K562 (cell line): ENCODE measurements at regions of chrX and their contacts with region 1.

Region 1: GRCh38 chrX:131830400-131831184 is 192.5 kb upstream of the STK26 start:
- DNase-seq: peak; percentile 71 to 92 (median 75)
- ATAC-seq: peak; percentile 96
- H3K4me3 ChIP-seq: peak overlapping the region; percentile 53
- H3K27ac ChIP-seq: peak overlapping the region; percentile 70
- H3K4me1 ChIP-seq: peaks cover 0 to 12% of the 10 kb centered on the region in 2 experiments; a peak in 2 of 5 replicates
- H3K27me3 ChIP-seq: no peaks in the 10 kb centered on the region
- CTCF ChIP-seq: peak; percentile 50 to 84 (median 82)
- EP300 ChIP-seq: peak; percentile 68
- POLR2A ChIP-seq: peak; percentile 73
- RAD21 ChIP-seq: peak; percentile 74 to 86

Region 2: GRCh38 chrX:131901546-131901945 is 71.0 kb after region 1 on chrX:
- CTCF ChIA-PET with region 1: no interaction called
- POLR2A ChIA-PET with region 1: no interaction called
- in situ Hi-C with region 1: no loop called
- intact Hi-C with region 1: no loop called
- DNase-seq: no peak
- ATAC-seq: no peak
- H3K4me3 ChIP-seq: no peak overlapping the region
- H3K27ac ChIP-seq: no peak overlapping the region
- H3K4me1 ChIP-seq: no peaks in the 10 kb centered on the region
- H3K27me3 ChIP-seq: no peaks in the 10 kb centered on the region
- CTCF ChIP-seq: no peak
- EP300 ChIP-seq: no peak
- POLR2A ChIP-seq: no peak
- RAD21 ChIP-seq: no peak

Region 3: DNA sequence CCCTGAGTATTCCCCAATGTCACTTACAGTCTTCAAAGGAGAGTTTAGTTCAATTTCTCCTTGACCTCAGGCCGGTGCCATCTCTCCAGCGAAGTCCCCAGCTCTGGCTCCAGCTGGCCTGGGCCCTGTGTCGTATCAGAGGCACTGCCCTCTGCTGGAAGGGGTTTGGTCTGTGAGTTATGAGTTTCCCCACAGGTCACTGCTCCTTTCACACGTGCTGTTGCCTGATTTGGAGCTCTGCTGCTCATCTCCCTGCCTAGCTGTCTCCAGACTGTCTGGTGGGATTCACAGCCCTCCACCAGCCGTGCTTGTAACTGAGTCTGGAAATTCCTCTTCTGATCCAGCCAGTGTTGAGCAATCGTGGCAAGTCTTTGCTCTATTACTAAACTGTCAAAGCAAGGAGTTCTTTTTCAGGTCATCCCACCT is 388.8 kb after region 1 on chrX and contains the start of gene RAP2C:
- CTCF ChIA-PET with region 1: no interaction called
- POLR2A ChIA-PET with region 1: interaction called, 3 read pairs
- in situ Hi-C with region 1: loop called (anchors 5 kb)
- intact Hi-C with region 1: loop called (anchors 1 kb)
- DNase-seq: peak; percentile 55 to 88 (median 67)
- ATAC-seq: peak; percentile 83
- H3K4me3 ChIP-seq: peak within 1 kb of the TSS; percentile 70
- H3K27ac ChIP-seq: peak within 1 kb of the TSS; percentile 74
- H3K4me1 ChIP-seq: peaks cover 0 to 4% of the 10 kb centered on the region in 2 experiments; a peak in 2 of 5 replicates
- H3K27me3 ChIP-seq: no peaks in the 10 kb centered on the region
- CTCF ChIP-seq: peak; percentile 67 to 69 (median 69)
- EP300 ChIP-seq: no peak
- POLR2A ChIP-seq: no peak
- RAD21 ChIP-seq: peak; percentile 67 to 71
- polyA plus RNA-seq, gene RAP2C: 13.0 to 16.6 TPM

Region 4: DNA sequence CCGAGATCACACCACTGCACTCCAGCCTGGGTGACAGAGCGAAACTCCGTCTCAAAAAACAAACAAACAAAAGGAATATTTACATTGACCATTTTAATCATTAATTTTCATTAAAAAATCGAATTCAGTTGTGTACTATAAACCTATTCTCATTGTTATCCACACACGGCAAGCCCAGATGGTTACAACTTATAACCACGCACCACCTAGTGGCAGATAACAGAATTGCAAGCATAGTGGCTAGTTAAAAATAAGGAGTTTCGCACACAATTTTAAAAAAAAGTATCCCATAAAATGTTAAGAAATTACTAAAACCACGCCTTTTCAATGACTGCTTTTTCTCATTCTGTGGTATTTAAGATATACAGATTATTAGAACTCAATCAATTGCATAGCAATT is 632.8 kb after region 1 on chrX:
- CTCF ChIA-PET with region 1: no interaction called
- POLR2A ChIA-PET with region 1: no interaction called
- in situ Hi-C with region 1: loop called (anchors 25 kb)
- intact Hi-C with region 1: no loop called
- DNase-seq: peak; percentile 17 to 45 (median 38)
- ATAC-seq: no peak
- H3K4me3 ChIP-seq: no peak overlapping the region
- H3K27ac ChIP-seq: no peak overlapping the region
- H3K4me1 ChIP-seq: no peaks in the 10 kb centered on the region
- H3K27me3 ChIP-seq: no peaks in the 10 kb centered on the region
- CTCF ChIP-seq: peak; percentile 38 to 59 (median 56); a peak in 5 of 6 replicates
- EP300 ChIP-seq: no peak
- POLR2A ChIP-seq: no peak
- RAD21 ChIP-seq: peak; percentile 35 to 49

Region 5: DNA sequence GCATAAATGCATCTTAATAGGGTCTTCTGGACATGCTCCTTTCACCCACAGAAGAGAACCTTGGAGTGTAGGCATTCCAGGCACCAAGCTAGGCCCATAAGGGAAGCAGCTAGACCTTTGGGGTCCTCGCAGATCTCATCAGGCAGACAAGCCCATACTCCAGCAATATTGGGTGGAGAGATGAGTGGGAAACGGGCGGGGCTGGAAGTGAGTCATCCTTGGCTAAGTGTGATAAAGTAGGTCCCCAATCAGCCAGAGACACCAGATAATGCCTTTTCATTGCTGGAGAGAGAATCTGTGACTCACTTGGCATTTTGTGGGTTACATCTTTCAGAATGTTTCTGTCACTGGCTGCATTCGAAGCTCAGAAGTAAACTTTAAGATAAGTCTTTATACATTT is 791.5 kb after region 1 on chrX:
- CTCF ChIA-PET with region 1: no interaction called
- POLR2A ChIA-PET with region 1: no interaction called
- in situ Hi-C with region 1: loop called (anchors 10 kb)
- intact Hi-C with region 1: no loop called
- DNase-seq: peak; percentile 20 to 49 (median 44)
- ATAC-seq: peak; percentile 55; the same call in 2 of the 3 replicates
- H3K4me3 ChIP-seq: no peak overlapping the region
- H3K27ac ChIP-seq: no peak overlapping the region
- H3K4me1 ChIP-seq: no peaks in the 10 kb centered on the region; a peak in 1 of 5 replicates
- H3K27me3 ChIP-seq: no peaks in the 10 kb centered on the region
- CTCF ChIP-seq: no peak
- EP300 ChIP-seq: no peak
- POLR2A ChIP-seq: no peak
- RAD21 ChIP-seq: no peak

Region 6: GRCh38 chrX:132986556-132986955 is 1156.0 kb after region 1 on chrX:
- CTCF ChIA-PET with region 1: no interaction called
- POLR2A ChIA-PET with region 1: no interaction called
- in situ Hi-C with region 1: loop called (anchors 5 kb)
- intact Hi-C with region 1: no loop called
- DNase-seq: no peak
- ATAC-seq: no peak
- H3K4me3 ChIP-seq: no peak overlapping the region
- H3K27ac ChIP-seq: no peak overlapping the region
- H3K4me1 ChIP-seq: no peaks in the 10 kb centered on the region
- H3K27me3 ChIP-seq: no peaks in the 10 kb centered on the region
- CTCF ChIP-seq: no peak
- EP300 ChIP-seq: no peak
- POLR2A ChIP-seq: no peak
- RAD21 ChIP-seq: no peak

Region 7: GRCh38 chrX:133670383-133670782 is 1839.8 kb after region 1 on chrX:
- CTCF ChIA-PET with region 1: no interaction called
- POLR2A ChIA-PET with region 1: no interaction called
- in situ Hi-C with region 1: no loop called
- intact Hi-C with region 1: loop called (anchors 2 kb)
- DNase-seq: peak; percentile 33 to 40 (median 38)
- ATAC-seq: 0 out of 3 replicates have a peak, but pooled peaks have one; percentile 35
- H3K4me3 ChIP-seq: no peak overlapping the region
- H3K27ac ChIP-seq: no peak overlapping the region
- H3K4me1 ChIP-seq: no peaks in the 10 kb centered on the region
- H3K27me3 ChIP-seq: no peaks in the 10 kb centered on the region
- CTCF ChIP-seq: peak; percentile 42 to 71 (median 62); a peak in 5 of 6 replicates
- EP300 ChIP-seq: no peak
- POLR2A ChIP-seq: no peak
- RAD21 ChIP-seq: peak; percentile 69 to 75